Sigmoid colon (tissue), 7 donors: ENCODE measurements at regions of chr3 and their contacts with region 1.

Region 1: GRCh38 chr3:38136777-38137614 is at the start of gene ACAA1:
- DNase-seq: peak; percentile 100
- H3K4me3 ChIP-seq: peak within 1 kb of the TSS; percentile 72 to 96 (median 89)
- H3K27ac ChIP-seq: peak within 1 kb of the TSS; percentile 89 to 97 (median 94)
- H3K4me1 ChIP-seq: peaks cover 0 to 60% (median 37%) of the 10 kb centered on the region in 4 donors
- H3K27me3 ChIP-seq: no peaks in the 10 kb centered on the region
- CTCF ChIP-seq: no peak
- EP300 ChIP-seq: no peak
- POLR2A ChIP-seq: peak; percentile 82 to 89
- total RNA-seq, gene ACAA1: 42.6 to 53.2 (median 47.6) TPM

Region 2: GRCh38 chr3:38027466-38028465 is 109.2 kb before region 1 on chr3:
- intact Hi-C with region 1: loop called (anchors 2 kb)
- DNase-seq: no peak
- H3K4me3 ChIP-seq: no peak overlapping the region
- H3K27ac ChIP-seq: peak overlapping the region; percentile 75 to 87 (median 86)
- H3K4me1 ChIP-seq: peaks cover 0 to 56% (median 45%) of the 10 kb centered on the region in 4 donors
- H3K27me3 ChIP-seq: no peaks in the 10 kb centered on the region
- CTCF ChIP-seq: no peak
- EP300 ChIP-seq: no peak
- POLR2A ChIP-seq: no peak

Region 3: DNA sequence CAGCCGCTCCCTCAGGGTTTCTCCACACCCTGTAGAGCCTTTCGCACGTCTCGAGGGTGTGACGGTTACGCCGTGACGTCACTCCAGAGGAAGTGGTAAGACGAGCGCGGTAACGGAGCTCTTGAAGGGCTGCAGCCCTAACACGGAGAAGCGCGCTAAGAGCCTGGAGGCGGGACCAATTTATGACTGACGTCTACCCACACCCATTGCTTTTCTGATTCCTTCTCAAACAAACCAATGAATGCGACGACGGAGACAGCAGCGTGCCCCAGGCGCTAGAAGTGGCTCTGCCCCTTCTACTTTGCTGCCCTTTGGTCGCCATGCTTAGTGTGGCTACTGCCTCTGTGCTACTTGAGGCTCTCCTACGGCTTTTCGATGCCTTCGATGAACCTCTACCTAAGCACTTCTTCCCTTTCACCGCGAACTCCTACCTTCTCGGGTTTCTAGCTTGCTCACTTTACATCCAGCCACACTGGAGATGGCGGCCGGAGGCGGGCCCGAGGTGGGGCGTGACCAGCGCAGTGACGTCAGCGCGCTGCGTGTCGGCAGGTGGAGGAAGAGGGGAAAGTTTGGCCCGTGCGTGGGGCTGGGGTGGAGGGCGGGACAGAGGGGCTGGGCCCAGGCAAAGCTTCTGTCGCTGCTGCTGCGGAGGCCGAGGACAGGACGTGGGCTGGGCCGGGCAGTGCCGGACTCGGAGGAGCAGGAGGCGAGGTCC is 28.1 kb after region 1 on chr3 and contains the start of gene OXSR1:
- intact Hi-C with region 1: loop called (anchors 1 kb)
- DNase-seq: peak; percentile 100
- H3K4me3 ChIP-seq: peak within 1 kb of the TSS; percentile 73 to 98 (median 93)
- H3K27ac ChIP-seq: peak within 1 kb of the TSS; percentile 92 to 99 (median 98)
- H3K4me1 ChIP-seq: peaks cover 0 to 20% (median 19%) of the 10 kb centered on the region in 4 donors
- H3K27me3 ChIP-seq: no peaks in the 10 kb centered on the region
- CTCF ChIP-seq: no peak
- EP300 ChIP-seq: peak in 2 of 4 donors; percentile 5 to 36
- POLR2A ChIP-seq: peak; percentile 84 to 90
- total RNA-seq, gene OXSR1: 21.8 to 28.8 (median 26.2) TPM

Region 4: DNA sequence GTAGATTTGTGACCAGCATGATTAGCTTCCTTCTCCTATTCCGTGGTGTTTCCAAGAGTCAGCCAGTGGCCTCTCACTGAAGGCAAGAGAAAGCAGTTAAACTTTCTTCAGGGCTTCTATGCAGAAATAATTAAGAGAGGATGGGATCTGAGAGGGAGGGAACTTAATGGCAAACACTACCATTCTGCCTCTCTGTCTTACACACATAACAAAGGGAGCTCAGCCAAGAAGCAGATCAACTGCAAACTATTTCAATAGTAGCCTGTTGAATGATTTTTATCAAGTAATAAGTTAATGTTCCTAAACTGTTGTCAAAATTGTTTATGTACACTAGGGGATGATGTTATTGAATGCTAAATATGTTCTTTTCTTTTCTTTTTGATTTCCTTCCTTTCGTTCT is 40.2 kb after region 1 on chr3:
- intact Hi-C with region 1: loop called (anchors 5 kb)
- DNase-seq: no peak
- H3K4me3 ChIP-seq: no peak overlapping the region
- H3K27ac ChIP-seq: no peak overlapping the region
- H3K4me1 ChIP-seq: peaks cover 0 to 17% (median 9%) of the 10 kb centered on the region in 4 donors
- H3K27me3 ChIP-seq: no peaks in the 10 kb centered on the region
- CTCF ChIP-seq: no peak
- EP300 ChIP-seq: no peak
- POLR2A ChIP-seq: no peak